ENCODE measurements at regions of chr13 and their contacts with region 1.

Region 1: GRCh38 chr13:46553886-46554858 is 1.2 kb downstream of the LRCH1 start:
- DNase-seq: peak; percentile 79 to 80
- H3K4me3 ChIP-seq: peak overlapping the region; percentile 99
- H3K4me3 Mint-ChIP-seq: peak overlapping the region; percentile 97
- H3K27ac Mint-ChIP-seq: peak overlapping the region; percentile 87
- H3K4me1 ChIP-seq: peaks cover 23% of the 10 kb centered on the region
- H3K4me1 Mint-ChIP-seq: peaks cover 33% of the 10 kb centered on the region
- H3K27me3 ChIP-seq: no peaks in the 10 kb centered on the region
- H3K27me3 Mint-ChIP-seq: no peaks in the 10 kb centered on the region
- CTCF ChIP-seq: peak; percentile 34 to 55

Region 2: GRCh38 chr13:46492946-46493345 is 61.2 kb before region 1 on chr13:
- CTCF ChIA-PET with region 1: no interaction called
- POLR2A ChIA-PET with region 1: no interaction called
- intact Hi-C with region 1: loop called (anchors 1 kb)
- DNase-seq: peak in 1 of 2 experiments; percentile 72
- H3K4me3 ChIP-seq: no peak overlapping the region
- H3K4me3 Mint-ChIP-seq: no peak overlapping the region
- H3K27ac Mint-ChIP-seq: no peak overlapping the region
- H3K4me1 ChIP-seq: peaks cover 32% of the 10 kb centered on the region
- H3K4me1 Mint-ChIP-seq: peaks cover 36% of the 10 kb centered on the region
- H3K27me3 ChIP-seq: no peaks in the 10 kb centered on the region
- H3K27me3 Mint-ChIP-seq: no peaks in the 10 kb centered on the region
- CTCF ChIP-seq: peak; percentile 63 to 65

Region 3: GRCh38 chr13:46595136-46595886 is 41.1 kb after region 1 on chr13:
- CTCF ChIA-PET with region 1: no interaction called
- POLR2A ChIA-PET with region 1: no interaction called
- intact Hi-C with region 1: loop called (anchors 2 kb)
- DNase-seq: no peak
- H3K4me3 ChIP-seq: no peak overlapping the region
- H3K4me3 Mint-ChIP-seq: no peak overlapping the region
- H3K27ac Mint-ChIP-seq: peak overlapping the region; percentile 48
- H3K4me1 ChIP-seq: peaks cover 72% of the 10 kb centered on the region
- H3K4me1 Mint-ChIP-seq: peaks cover 64% of the 10 kb centered on the region
- H3K27me3 ChIP-seq: no peaks in the 10 kb centered on the region
- H3K27me3 Mint-ChIP-seq: no peaks in the 10 kb centered on the region
- CTCF ChIP-seq: no peak

Region 4: GRCh38 chr13:46655377-46656180 is 101.4 kb after region 1 on chr13:
- CTCF ChIA-PET with region 1: no interaction called
- POLR2A ChIA-PET with region 1: no interaction called
- intact Hi-C with region 1: loop called (anchors 5 kb)
- DNase-seq: peak; percentile 70 to 78
- H3K4me3 ChIP-seq: no peak overlapping the region
- H3K4me3 Mint-ChIP-seq: no peak overlapping the region
- H3K27ac Mint-ChIP-seq: peak overlapping the region; percentile 65
- H3K4me1 ChIP-seq: peaks cover 58% of the 10 kb centered on the region
- H3K4me1 Mint-ChIP-seq: peaks cover 35% of the 10 kb centered on the region
- H3K27me3 ChIP-seq: no peaks in the 10 kb centered on the region
- H3K27me3 Mint-ChIP-seq: no peaks in the 10 kb centered on the region
- CTCF ChIP-seq: no peak

Region 5: GRCh38 chr13:46679369-46680120 is 125.4 kb after region 1 on chr13:
- CTCF ChIA-PET with region 1: no interaction called
- POLR2A ChIA-PET with region 1: no interaction called
- intact Hi-C with region 1: loop called (anchors 2 kb)
- DNase-seq: no peak
- H3K4me3 ChIP-seq: no peak overlapping the region
- H3K4me3 Mint-ChIP-seq: no peak overlapping the region
- H3K27ac Mint-ChIP-seq: no peak overlapping the region
- H3K4me1 ChIP-seq: peaks cover 59% of the 10 kb centered on the region
- H3K4me1 Mint-ChIP-seq: peaks cover 24% of the 10 kb centered on the region
- H3K27me3 ChIP-seq: no peaks in the 10 kb centered on the region
- H3K27me3 Mint-ChIP-seq: no peaks in the 10 kb centered on the region
- CTCF ChIP-seq: no peak

Region 6: DNA sequence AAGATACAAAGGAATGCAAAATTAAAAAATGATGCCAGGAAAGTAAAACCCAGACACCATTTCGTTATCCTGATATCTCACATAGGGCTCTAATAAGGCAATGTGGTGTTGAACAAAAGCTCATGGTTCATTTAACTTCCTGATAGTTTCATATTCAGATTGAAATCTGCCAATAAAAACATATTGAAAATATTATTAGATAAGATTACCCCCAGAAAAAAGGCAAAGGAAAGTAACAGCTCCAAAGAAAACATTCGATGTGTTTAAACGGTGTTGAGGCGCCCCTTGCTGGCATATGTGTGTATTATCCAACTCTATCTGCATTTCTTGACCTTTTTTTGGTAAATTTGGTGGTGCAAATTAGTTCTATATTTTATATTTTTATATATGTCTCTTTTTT is 166.9 kb after region 1 on chr13:
- CTCF ChIA-PET with region 1: interaction called, 32 read pairs
- POLR2A ChIA-PET with region 1: interaction called, 3 read pairs
- intact Hi-C with region 1: loop called (anchors 1 kb)
- DNase-seq: peak in 1 of 2 experiments; percentile 53
- H3K4me3 ChIP-seq: no peak overlapping the region
- H3K4me3 Mint-ChIP-seq: no peak overlapping the region
- H3K27ac Mint-ChIP-seq: no peak overlapping the region
- H3K4me1 ChIP-seq: peaks cover 29% of the 10 kb centered on the region
- H3K4me1 Mint-ChIP-seq: peaks cover 14% of the 10 kb centered on the region
- H3K27me3 ChIP-seq: no peaks in the 10 kb centered on the region
- H3K27me3 Mint-ChIP-seq: no peaks in the 10 kb centered on the region
- CTCF ChIP-seq: peak; percentile 61 to 74

Measured in Caco-2 (cell line).